ENCODE measurements at regions of chr2 and their contacts with region 1.

Region 1: DNA sequence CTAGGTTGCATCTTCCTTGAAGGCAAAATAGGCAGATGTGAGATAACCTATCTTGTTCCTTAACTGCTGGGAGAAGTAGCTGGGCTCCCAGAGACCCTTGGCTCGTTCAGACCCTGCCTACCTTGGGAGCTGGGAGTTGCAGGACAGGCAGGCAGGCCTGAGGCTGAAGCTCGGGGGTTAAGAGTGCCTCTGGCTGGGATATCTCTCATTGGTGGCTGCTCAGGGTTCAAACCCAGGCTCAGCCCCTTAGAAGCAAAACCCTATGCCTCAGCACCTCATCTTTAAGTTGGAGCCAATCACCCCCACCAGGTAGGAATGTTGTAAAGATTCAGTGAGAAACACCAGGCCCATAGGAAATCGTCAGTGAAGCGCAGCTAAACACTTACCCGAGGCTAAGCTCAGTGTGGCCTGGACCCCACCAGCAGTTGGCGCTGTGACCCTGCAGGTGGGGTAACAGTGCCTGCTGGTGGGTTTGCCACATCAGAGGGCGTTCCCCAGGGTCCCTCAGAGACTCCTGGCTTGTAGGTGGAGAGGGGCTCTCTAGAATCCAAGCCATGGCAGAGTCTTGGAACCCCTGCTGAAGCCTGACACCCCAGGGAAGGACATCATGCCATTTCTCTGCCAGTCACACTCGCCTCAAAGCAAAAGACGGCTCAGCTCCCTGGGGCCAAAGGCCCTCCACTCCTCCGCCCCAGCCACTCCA is 54.6 kb upstream of the GPR17 start:
- DNase-seq: peak; percentile 83
- ATAC-seq: peak; percentile 98
- H3K4me3 ChIP-seq: no peak overlapping the region
- H3K4me3 Mint-ChIP-seq: no peak overlapping the region
- H3K27ac ChIP-seq: no peak overlapping the region
- H3K27ac Mint-ChIP-seq: no peak overlapping the region
- H3K4me1 ChIP-seq: peaks cover 10 to 23% of the 10 kb centered on the region in 2 donors
- H3K4me1 Mint-ChIP-seq: peaks cover 28% of the 10 kb centered on the region
- H3K27me3 ChIP-seq: peaks cover 0 to 2% (median 0%) of the 10 kb centered on the region in 4 experiments
- H3K27me3 Mint-ChIP-seq: no peaks in the 10 kb centered on the region
- CTCF ChIP-seq: peak; percentile 95

Region 2: DNA sequence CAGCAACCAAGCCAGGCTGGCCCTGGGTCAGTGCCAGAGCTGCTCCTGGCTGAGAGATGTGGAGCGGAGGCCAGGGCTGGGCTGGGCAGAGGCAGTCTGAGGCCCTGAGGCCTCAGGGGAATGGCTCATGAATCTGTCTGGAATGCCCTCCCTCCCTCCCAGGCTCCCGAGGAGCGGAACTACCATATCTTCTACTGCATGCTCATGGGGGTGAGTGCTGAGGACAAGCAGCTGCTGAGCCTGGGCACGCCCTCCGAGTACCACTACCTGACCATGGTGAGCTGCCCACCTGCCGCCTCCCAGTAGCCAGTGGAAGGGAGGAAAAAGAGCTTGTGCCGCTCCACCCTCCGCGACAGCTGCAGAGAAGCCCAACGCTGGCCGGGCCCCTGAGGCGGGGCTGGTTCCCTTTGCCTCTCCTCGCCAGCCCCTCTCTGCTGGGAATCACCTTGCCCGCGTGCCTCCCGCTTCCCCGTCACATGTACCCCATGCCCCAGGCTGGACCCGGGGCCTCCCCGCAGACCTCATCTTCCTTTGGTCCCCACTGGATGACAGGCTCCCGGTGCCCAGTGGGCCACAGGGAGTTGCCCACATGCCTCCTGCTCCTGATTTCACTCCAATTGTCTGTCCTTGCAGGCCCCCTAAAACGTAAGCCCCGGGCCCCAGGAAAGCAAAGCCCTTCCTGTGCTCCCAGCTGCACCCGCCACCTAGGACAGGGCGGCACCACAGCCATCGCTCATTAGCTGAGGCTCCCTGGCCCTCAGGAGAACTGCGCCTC is 14.8 kb before region 1 on chr2:
- CTCF ChIA-PET with region 1: interaction called, 26 read pairs
- POLR2A ChIA-PET with region 1: interaction called, 4 read pairs
- intact Hi-C with region 1: no loop called
- DNase-seq: peak; percentile 6
- ATAC-seq: no peak
- H3K4me3 ChIP-seq: no peak overlapping the region
- H3K4me3 Mint-ChIP-seq: peak overlapping the region; percentile 88
- H3K27ac ChIP-seq: peak overlapping the region; percentile 59 to 70
- H3K27ac Mint-ChIP-seq: peak overlapping the region; percentile 91
- H3K4me1 ChIP-seq: peaks cover 45 to 47% of the 10 kb centered on the region in 2 donors
- H3K4me1 Mint-ChIP-seq: peaks cover 63% of the 10 kb centered on the region
- H3K27me3 ChIP-seq: no peaks in the 10 kb centered on the region
- H3K27me3 Mint-ChIP-seq: no peaks in the 10 kb centered on the region
- CTCF ChIP-seq: no peak

Region 3: DNA sequence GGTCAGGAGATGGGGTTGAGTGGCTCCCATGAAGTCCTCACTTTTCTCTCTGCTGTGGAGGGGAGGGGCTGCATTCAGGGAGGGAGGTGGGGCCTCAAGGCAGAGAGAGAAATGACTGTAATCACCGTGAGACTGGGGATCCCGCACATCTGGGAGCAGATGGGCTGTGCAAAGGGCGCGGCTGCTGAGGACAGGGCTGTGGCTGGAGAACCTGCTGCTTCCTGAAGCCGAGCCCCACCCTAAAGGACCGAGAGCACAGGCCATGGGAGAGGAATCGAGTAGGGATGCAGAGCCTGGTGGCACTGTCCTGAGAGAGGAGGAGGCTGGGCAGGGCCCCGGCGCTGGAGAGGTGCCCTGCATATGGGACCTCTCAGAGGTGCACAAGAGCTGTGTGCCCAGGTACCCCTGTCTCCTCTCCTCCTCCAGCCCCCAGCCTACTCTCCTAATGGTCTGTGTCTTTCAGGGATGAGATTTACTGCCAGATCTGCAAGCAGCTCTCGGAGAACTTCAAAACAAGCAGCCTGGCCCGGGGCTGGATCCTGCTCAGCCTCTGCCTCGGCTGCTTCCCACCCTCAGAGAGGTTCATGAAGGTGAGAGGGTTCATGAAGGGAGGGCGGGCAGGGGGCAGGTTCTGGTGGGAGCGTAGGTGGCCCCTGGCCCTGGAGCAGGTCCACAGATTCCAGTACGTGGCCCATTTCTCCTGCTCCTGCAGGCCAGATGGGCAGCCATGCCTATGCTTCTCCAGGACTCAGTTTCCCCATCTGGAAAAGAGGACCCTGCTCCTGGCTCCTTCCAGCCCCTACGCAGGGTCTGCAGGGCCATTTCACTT is 28.7 kb after region 1 on chr2:
- CTCF ChIA-PET with region 1: interaction called, 13 read pairs
- POLR2A ChIA-PET with region 1: no interaction called
- intact Hi-C with region 1: no loop called
- DNase-seq: no peak
- ATAC-seq: peak; percentile 20
- H3K4me3 ChIP-seq: peak overlapping the region in 3 of 5 experiments; percentile 19 to 52 (median 44)
- H3K4me3 Mint-ChIP-seq: peak overlapping the region; percentile 79
- H3K27ac ChIP-seq: peak overlapping the region in 1 of 2 donors; percentile 63
- H3K27ac Mint-ChIP-seq: peak overlapping the region; percentile 91
- H3K4me1 ChIP-seq: peaks cover 26 to 74% of the 10 kb centered on the region in 2 donors
- H3K4me1 Mint-ChIP-seq: peaks cover 79% of the 10 kb centered on the region
- H3K27me3 ChIP-seq: no peaks in the 10 kb centered on the region
- H3K27me3 Mint-ChIP-seq: no peaks in the 10 kb centered on the region
- CTCF ChIP-seq: no peak

Region 4: DNA sequence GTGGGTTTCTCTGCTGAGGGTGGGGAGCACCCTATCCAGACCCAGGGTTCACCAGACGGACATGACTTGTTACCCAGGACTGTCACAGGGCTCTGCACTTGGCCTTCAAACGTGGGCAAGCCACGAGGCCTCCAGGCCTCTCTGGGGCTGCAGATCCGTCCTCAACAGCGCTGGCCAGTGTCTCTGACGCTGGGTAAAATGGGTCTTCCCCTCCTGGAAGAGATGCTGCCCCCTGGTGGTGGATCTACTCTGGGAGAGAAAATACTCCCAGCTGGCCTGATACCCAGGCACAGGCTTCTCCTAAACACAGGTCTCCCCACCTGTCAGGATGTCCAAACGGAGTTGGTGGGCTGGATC is 58.3 kb after region 1 on chr2:
- CTCF ChIA-PET with region 1: interaction called, 553 read pairs
- POLR2A ChIA-PET with region 1: interaction called, 13 read pairs
- intact Hi-C with region 1: loop called (anchors 1 kb)
- DNase-seq: peak; percentile 87
- ATAC-seq: peak; percentile 71
- H3K4me3 ChIP-seq: peak overlapping the region in 1 of 5 experiments; percentile 6
- H3K4me3 Mint-ChIP-seq: peak overlapping the region; percentile 74
- H3K27ac ChIP-seq: no peak overlapping the region
- H3K27ac Mint-ChIP-seq: peak overlapping the region; percentile 82
- H3K4me1 ChIP-seq: peaks cover 30 to 66% of the 10 kb centered on the region in 2 donors
- H3K4me1 Mint-ChIP-seq: peaks cover 64% of the 10 kb centered on the region
- H3K27me3 ChIP-seq: no peaks in the 10 kb centered on the region
- H3K27me3 Mint-ChIP-seq: no peaks in the 10 kb centered on the region
- CTCF ChIP-seq: peak; percentile 92

Region 5: GRCh38 chr2:127695491-127696472 is 104.4 kb after region 1 on chr2:
- CTCF ChIA-PET with region 1: interaction called, 36 read pairs
- POLR2A ChIA-PET with region 1: interaction called, 4 read pairs
- intact Hi-C with region 1: loop called (anchors 1 kb)
- DNase-seq: peak; percentile 68
- ATAC-seq: peak; percentile 58
- H3K4me3 ChIP-seq: peak overlapping the region in 3 of 5 experiments; percentile 21 to 38 (median 35)
- H3K4me3 Mint-ChIP-seq: no peak overlapping the region
- H3K27ac ChIP-seq: no peak overlapping the region
- H3K27ac Mint-ChIP-seq: no peak overlapping the region
- H3K4me1 ChIP-seq: peaks cover 6 to 11% of the 10 kb centered on the region in 2 donors
- H3K4me1 Mint-ChIP-seq: peaks cover 8% of the 10 kb centered on the region
- H3K27me3 ChIP-seq: no peaks in the 10 kb centered on the region
- H3K27me3 Mint-ChIP-seq: no peaks in the 10 kb centered on the region
- CTCF ChIP-seq: peak; percentile 29

Region 6: DNA sequence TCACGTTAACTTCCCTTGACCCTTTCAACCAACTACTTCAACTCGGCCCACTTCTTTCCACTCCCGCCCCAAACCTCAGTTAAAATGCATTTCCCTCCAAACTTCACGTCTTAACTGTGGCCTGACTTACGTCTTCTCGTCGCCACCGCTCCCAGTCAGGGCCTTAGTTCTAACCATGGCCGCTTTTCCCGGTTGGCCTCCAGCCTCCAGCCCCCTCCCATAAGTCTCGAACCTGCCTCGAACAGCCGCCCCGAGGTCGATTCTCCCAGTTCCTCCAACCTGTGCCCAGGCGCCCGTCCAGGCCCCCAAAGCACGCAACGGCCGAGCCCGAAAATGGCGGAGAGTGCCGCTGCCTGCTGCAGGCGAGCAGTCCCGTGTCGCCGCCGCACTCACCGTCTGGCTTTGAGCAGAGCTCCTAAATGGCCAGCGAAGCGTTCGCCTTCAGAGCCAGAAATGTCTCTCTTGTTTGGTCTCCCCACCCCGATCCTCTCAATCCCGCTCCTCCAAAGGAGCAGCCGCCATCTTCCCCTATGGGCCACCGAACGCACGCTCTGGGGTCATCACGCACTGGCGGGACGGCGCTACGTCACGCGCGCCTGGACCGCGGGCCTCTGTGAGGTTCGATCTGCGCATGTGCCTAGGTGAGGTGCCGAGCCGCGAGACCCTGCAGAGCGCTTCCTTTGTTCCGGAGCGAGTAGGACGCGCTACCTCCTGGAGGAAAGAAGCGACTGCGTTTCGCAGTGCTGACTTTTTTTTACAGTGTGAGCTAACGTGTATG is 219.4 kb after region 1 on chr2 and contains the start of gene WDR33:
- CTCF ChIA-PET with region 1: interaction called, 19 read pairs
- POLR2A ChIA-PET with region 1: no interaction called
- intact Hi-C with region 1: no loop called
- DNase-seq: peak; percentile 96
- ATAC-seq: peak; percentile 97
- H3K4me3 ChIP-seq: peak within 1 kb of the TSS; percentile 66 to 99 (median 78)
- H3K4me3 Mint-ChIP-seq: peak within 1 kb of the TSS; percentile 97
- H3K27ac ChIP-seq: peak within 1 kb of the TSS; percentile 91 to 96
- H3K27ac Mint-ChIP-seq: peak within 1 kb of the TSS; percentile 99
- H3K4me1 ChIP-seq: peaks cover 30 to 37% of the 10 kb centered on the region in 2 donors
- H3K4me1 Mint-ChIP-seq: peaks cover 46% of the 10 kb centered on the region
- H3K27me3 ChIP-seq: no peaks in the 10 kb centered on the region
- H3K27me3 Mint-ChIP-seq: no peaks in the 10 kb centered on the region
- CTCF ChIP-seq: no peak
- total RNA-seq, gene WDR33: 95.2 and 101 TPM in 2 replicates

Region 7: GRCh38 chr2:127901339-127902056 is 310.1 kb after region 1 on chr2:
- CTCF ChIA-PET with region 1: no interaction called
- POLR2A ChIA-PET with region 1: no interaction called
- intact Hi-C with region 1: no loop called
- DNase-seq: no peak
- ATAC-seq: no peak
- H3K4me3 ChIP-seq: no peak overlapping the region
- H3K4me3 Mint-ChIP-seq: no peak overlapping the region
- H3K27ac ChIP-seq: no peak overlapping the region
- H3K27ac Mint-ChIP-seq: no peak overlapping the region
- H3K4me1 ChIP-seq: peaks cover 21 to 22% of the 10 kb centered on the region in 2 donors
- H3K4me1 Mint-ChIP-seq: peaks cover 20% of the 10 kb centered on the region
- H3K27me3 ChIP-seq: no peaks in the 10 kb centered on the region
- H3K27me3 Mint-ChIP-seq: no peaks in the 10 kb centered on the region
- CTCF ChIP-seq: no peak

Measured in B cell (primary cell).